ENCODE measurements at regions of chr1 and their contacts with region 1.

Region 1: DNA sequence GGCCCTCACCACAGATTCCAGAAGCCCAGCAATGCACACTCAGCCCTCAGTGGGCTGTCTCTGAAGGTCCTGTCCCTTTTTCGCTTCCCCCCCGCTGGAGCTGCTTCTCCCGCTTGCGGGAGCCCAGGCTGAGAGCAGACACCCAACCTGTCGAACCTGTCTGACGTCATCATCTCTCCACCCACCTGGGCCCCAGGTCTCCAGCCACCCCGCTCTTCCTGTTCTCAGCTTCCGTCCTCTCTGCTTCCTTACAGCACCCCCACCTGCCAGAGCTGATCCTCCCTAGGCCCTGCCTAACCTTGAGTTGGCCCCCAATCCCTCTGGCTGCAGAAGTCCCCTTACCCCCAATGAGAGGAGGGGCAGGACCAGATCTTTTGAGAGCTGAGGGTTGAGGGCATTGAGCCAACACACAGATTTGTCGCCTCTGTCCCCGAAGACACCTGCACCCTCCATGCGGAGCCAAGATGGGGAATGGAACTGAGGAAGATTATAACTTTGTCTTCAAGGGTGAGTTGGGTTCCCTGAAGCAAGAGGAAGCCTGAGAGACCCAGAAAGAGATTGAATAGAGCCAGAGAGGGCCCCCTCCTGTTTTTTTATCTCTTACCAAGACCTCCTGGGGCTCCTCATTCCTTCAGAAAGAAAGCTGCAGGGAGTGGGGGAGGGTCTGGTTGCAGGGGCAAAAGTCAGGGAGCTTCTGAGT is at the start of gene RAB25:
- DNase-seq: peak; percentile 66 to 84
- H3K4me3 ChIP-seq: peak within 1 kb of the TSS; percentile 39 to 65 (median 52)
- H3K27ac ChIP-seq: peak within 1 kb of the TSS; percentile 93
- H3K4me1 ChIP-seq: peaks cover 0 to 22% (median 11%) of the 10 kb centered on the region in 4 experiments; a peak in 6 of 7 replicates
- H3K27me3 ChIP-seq: no peaks in the 10 kb centered on the region
- CTCF ChIP-seq: no peak
- EP300 ChIP-seq: peak in 1 of 2 experiments; percentile 35; a peak in 1 of 3 replicates
- POLR2A ChIP-seq: peak; percentile 52 to 54; a peak in 2 of 3 replicates
- RAD21 ChIP-seq: no peak; a peak in 1 of 4 replicates
- total RNA-seq, gene RAB25: 34.8 and 38.5 TPM in 2 replicates

Region 2: DNA sequence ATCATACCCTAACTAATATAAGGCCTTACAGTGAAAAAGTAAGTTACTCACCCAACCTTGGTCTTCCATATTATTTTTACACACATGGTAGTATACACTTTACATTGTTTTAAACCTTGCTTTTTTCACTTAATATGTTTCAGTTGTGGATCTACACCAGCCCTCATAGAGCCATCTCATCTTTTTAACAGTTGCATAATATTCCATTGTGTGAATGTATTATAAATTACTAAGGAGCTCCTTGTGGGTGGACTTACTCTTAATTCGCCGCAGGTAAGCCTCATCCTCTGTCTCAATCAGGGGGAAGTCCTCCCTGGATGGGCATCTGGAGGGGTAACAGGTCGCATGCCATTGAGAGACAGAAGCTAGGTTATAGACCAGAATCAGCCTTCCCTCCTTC is 106.4 kb before region 1 on chr1:
- CTCF ChIA-PET with region 1: interaction called, 10 read pairs
- POLR2A ChIA-PET with region 1: no interaction called
- DNase-seq: no peak
- H3K4me3 ChIP-seq: no peak overlapping the region
- H3K27ac ChIP-seq: no peak overlapping the region
- H3K4me1 ChIP-seq: no peaks in the 10 kb centered on the region
- H3K27me3 ChIP-seq: no peaks in the 10 kb centered on the region
- CTCF ChIP-seq: no peak
- EP300 ChIP-seq: no peak
- POLR2A ChIP-seq: no peak
- RAD21 ChIP-seq: no peak

Region 3: GRCh38 chr1:155978325-155978972 is 82.6 kb before region 1 on chr1 and contains the start of gene ARHGEF2:
- CTCF ChIA-PET with region 1: interaction called, 16 read pairs
- POLR2A ChIA-PET with region 1: interaction called, 26 read pairs
- DNase-seq: peak; percentile 78 to 90
- H3K4me3 ChIP-seq: peak within 1 kb of the TSS; percentile 77 to 97 (median 90)
- H3K27ac ChIP-seq: peak within 1 kb of the TSS; percentile 88
- H3K4me1 ChIP-seq: peaks cover 31 to 49% (median 33%) of the 10 kb centered on the region in 4 experiments
- H3K27me3 ChIP-seq: no peaks in the 10 kb centered on the region
- CTCF ChIP-seq: peak; percentile 56 to 67 (median 65)
- EP300 ChIP-seq: no peak; a peak in 1 of 3 replicates
- POLR2A ChIP-seq: peak; percentile 55 to 63
- RAD21 ChIP-seq: peak; percentile 38 to 56
- total RNA-seq, gene ARHGEF2: 68.3 and 80.5 TPM in 2 replicates

Region 4: DNA sequence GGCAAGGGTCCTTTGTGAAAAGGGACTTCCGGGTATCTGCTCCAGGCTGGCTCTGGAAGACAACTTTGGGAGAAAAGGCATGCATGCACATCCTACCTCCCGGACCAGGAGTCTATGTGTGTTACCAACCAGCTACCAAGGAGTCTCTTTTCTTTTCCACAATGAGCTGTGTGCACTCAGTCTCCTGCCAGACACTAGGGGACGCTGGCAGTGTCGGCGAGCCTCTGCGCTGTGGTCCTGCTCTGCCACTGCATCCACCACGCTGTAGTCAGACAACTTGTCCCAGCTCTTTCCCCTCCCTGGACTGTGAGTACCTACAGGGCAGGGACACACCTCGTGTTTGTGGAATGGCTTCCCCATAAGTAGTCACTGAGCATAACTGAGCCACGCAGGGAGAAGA is 35.2 kb before region 1 on chr1:
- CTCF ChIA-PET with region 1: interaction called, 19 read pairs
- POLR2A ChIA-PET with region 1: interaction called, 9 read pairs
- DNase-seq: peak; percentile 47 to 73
- H3K4me3 ChIP-seq: no peak overlapping the region
- H3K27ac ChIP-seq: no peak overlapping the region
- H3K4me1 ChIP-seq: peaks cover 0 to 3% (median 0%) of the 10 kb centered on the region in 4 experiments; a peak in 3 of 7 replicates
- H3K27me3 ChIP-seq: peaks cover 0 to 4% (median under 1%) of the 10 kb centered on the region in 4 experiments; a peak in 1 of 7 replicates
- CTCF ChIP-seq: peak; percentile 93 to 97 (median 96)
- EP300 ChIP-seq: no peak
- POLR2A ChIP-seq: no peak
- RAD21 ChIP-seq: peak; percentile 61 to 70

Region 5: DNA sequence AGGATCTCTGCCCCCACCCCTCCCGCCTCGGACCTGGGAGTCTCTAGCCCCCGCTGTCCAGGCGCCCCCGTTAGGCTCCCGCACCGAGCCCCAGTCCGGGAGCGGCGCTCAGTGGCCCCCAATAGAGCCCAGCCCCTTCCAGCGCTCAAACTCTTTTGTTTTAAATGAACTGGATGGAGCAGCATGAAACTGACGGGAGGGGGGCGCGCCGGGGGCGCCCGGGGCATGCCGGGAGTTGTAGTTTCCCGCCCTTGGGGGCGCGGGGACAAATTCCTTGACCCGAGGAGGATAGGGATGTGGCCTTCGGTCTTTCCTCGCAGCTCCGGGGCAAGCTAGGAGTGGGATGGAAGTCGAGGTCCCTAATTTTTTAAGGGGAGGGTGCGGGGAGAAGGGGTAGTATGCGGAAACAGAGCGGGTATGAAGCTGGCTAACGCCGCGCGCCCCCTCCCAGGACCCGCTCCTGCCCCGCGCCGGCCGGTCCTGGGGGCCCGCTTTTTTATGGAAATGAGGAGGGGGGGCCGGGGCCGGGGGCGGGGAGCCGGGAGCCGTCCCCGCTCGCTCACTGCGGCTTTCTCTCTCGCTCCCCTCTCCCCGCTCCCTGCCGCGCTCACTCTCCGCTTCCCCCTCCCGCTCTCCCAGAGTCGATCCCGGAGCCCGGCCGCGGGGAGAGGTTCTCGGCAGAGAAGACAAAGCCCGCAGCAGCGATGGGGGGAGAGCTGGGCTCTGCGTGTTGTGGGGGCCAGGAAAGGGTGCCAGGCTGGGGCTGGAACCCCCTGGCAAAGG is 21.4 kb after region 1 on chr1 and contains the start of gene MEX3A:
- CTCF ChIA-PET with region 1: interaction called, 17 read pairs
- POLR2A ChIA-PET with region 1: interaction called, 20 read pairs
- DNase-seq: peak; percentile 92 to 98
- H3K4me3 ChIP-seq: peak within 1 kb of the TSS; percentile 86 to 98 (median 94)
- H3K27ac ChIP-seq: peak within 1 kb of the TSS; percentile 86
- H3K4me1 ChIP-seq: peaks cover 10 to 23% (median 13%) of the 10 kb centered on the region in 4 experiments
- H3K27me3 ChIP-seq: no peaks in the 10 kb centered on the region
- CTCF ChIP-seq: no peak
- EP300 ChIP-seq: peak in 1 of 2 experiments; percentile 60; a peak in 1 of 3 replicates
- POLR2A ChIP-seq: peak; percentile 48 to 54; a peak in 2 of 3 replicates
- RAD21 ChIP-seq: no peak
- total RNA-seq, gene MEX3A: 52.4 and 54.7 TPM in 2 replicates

Region 6: DNA sequence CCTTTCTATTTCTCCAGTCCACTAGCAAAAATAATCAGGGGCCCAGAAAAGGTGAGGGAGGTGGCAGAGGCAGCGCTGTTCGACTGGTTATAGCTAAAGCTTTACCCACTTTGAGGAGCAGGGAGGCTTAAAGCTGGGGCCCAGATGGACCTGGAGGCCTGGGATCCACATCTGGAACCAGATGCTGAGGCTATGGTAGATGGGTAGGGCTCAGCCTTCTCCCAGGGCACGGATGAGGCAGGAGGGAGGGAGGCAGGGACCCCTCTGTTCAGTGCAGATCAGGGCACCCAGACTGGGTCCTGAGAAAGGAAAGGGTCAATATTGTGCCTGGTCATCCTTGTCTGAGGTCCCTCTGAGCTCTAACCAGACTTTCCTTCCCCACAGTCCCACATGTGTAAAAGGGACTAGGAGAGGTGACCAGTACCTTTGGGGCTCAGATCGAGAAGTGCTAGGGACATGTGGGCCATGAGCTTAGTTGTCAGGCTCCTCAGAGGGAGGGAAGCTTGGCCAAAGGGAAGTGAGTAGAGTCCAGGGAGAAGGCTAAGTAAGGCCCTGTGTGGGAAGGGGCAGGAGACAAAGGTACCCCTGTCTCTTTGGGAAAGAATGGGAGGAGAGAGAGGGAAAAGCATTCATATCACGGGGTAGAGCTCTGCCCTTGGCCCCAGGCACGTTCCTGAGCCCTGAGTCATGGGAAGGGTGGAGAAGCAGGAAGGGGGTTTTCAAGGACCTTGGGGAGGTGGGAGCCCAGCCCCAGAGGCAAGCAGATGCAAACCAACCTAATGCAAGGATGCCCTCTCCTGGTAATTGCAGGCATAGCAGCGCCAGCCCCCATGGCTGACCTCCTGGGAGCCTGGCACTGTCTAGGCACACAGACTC is 68.9 kb after region 1 on chr1:
- CTCF ChIA-PET with region 1: interaction called, 23 read pairs
- POLR2A ChIA-PET with region 1: interaction called, 4 read pairs
- DNase-seq: peak; percentile 95 to 98
- H3K4me3 ChIP-seq: 0 out of 8 replicates have a peak overlapping the region, but pooled peaks of 1 of the 4 experiments have one; percentile 5
- H3K27ac ChIP-seq: peak overlapping the region; percentile 88
- H3K4me1 ChIP-seq: peaks cover 6 to 21% (median 10%) of the 10 kb centered on the region in 4 experiments
- H3K27me3 ChIP-seq: no peaks in the 10 kb centered on the region
- CTCF ChIP-seq: peak; percentile 96 to 99 (median 99)
- EP300 ChIP-seq: peak in 1 of 2 experiments; percentile 26; a peak in 1 of 3 replicates
- POLR2A ChIP-seq: peak in 1 of 2 experiments; percentile 71; a peak in 2 of 3 replicates
- RAD21 ChIP-seq: peak; percentile 96 to 100

Measured in H1 (cell line).